ENCODE measurements at regions of chr2 and their contacts with region 1.

Region 1: DNA sequence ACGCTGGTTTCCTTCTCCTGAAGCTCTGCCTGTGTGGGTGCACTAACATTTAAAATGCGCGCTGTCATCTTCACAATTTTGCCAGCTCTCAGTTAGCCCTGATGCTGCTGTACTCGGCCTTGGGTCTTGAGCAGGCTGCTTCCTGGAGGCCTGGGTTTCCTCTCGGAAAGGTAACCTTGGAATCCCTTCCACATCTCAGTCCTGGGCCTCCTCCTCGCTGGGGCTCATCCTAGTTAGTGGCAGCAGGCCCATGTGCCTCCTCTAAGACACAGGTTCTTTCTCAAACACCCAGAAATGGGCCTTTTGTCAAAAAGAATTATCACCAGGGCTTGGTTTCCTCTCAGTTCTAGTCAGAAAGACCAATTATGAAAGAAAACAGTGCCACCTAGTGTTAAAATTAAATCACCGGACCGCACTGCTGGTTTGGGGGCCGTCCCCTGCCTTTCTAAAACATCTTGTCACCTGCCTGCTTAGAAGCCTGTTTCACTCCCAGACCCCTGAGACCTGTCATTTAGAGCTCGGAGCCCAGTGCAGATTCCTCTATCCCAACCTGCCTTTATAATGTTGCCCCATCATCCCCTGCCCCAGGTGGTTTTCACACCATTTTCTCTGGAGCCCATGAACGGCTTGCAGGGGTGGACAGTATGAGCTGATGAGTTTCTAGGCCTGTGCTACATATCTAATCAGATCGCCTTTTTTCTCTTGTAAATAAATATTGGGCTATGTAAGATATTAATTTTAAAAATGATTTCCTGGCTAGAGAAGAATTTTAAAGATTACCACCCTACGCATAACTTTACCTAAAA is 42.4 kb downstream of the HK2 start:
- DNase-seq: peak; percentile 60
- ATAC-seq: peak; percentile 68
- H3K4me3 ChIP-seq: no peak overlapping the region
- H3K27ac ChIP-seq: peak overlapping the region; percentile 75
- H3K4me1 ChIP-seq: peaks cover 40% of the 10 kb centered on the region
- H3K27me3 ChIP-seq: no peaks in the 10 kb centered on the region
- CTCF ChIP-seq: peak; percentile 72

Region 2: GRCh38 chr2:74714696-74715077 is 161.6 kb before region 1 on chr2:
- intact Hi-C with region 1: loop called (anchors 5 kb)
- DNase-seq: no peak
- ATAC-seq: no peak
- H3K4me3 ChIP-seq: peak overlapping the region; percentile 63
- H3K27ac ChIP-seq: no peak overlapping the region
- H3K4me1 ChIP-seq: no peaks in the 10 kb centered on the region
- H3K27me3 ChIP-seq: no peaks in the 10 kb centered on the region
- CTCF ChIP-seq: no peak

Region 3: DNA sequence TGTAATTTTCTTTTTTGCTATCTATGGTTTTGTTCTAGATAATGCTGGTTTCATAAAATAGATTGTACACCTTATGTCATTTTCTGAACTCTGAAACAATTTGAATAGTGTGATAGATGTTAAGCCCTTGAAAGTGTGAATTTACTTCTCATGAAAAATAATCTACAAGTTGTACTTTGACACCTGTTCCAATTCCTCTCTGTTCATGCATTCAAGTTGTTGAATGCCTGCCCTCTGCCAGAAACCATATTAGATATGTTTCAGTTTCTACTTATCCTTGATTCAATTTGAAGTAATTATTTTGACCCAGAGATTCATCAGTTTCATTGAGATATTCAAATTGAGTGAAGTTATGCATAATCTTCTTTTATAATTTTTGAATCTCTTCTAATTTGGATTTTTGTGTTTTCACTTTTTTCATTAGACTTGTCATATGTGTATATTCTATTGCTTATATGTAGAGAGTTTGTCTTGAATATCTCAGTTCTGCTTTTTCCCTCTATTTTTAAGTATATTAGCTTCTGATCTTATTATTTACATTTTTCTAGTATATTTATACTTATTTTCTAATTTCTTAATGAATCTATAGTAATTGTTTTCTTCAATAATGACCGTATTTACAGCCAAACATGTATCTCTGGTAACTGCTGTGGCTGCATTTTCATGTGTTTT is 466.4 kb after region 1 on chr2:
- intact Hi-C with region 1: no loop called
- DNase-seq: no peak
- ATAC-seq: no peak
- H3K4me3 ChIP-seq: no peak overlapping the region
- H3K27ac ChIP-seq: no peak overlapping the region
- H3K4me1 ChIP-seq: no peaks in the 10 kb centered on the region
- H3K27me3 ChIP-seq: no peaks in the 10 kb centered on the region
- CTCF ChIP-seq: no peak

Measured in upper lobe of right lung (tissue), 1 donor.